ENCODE measurements at regions of chr12 and their contacts with region 1.

Region 1: DNA sequence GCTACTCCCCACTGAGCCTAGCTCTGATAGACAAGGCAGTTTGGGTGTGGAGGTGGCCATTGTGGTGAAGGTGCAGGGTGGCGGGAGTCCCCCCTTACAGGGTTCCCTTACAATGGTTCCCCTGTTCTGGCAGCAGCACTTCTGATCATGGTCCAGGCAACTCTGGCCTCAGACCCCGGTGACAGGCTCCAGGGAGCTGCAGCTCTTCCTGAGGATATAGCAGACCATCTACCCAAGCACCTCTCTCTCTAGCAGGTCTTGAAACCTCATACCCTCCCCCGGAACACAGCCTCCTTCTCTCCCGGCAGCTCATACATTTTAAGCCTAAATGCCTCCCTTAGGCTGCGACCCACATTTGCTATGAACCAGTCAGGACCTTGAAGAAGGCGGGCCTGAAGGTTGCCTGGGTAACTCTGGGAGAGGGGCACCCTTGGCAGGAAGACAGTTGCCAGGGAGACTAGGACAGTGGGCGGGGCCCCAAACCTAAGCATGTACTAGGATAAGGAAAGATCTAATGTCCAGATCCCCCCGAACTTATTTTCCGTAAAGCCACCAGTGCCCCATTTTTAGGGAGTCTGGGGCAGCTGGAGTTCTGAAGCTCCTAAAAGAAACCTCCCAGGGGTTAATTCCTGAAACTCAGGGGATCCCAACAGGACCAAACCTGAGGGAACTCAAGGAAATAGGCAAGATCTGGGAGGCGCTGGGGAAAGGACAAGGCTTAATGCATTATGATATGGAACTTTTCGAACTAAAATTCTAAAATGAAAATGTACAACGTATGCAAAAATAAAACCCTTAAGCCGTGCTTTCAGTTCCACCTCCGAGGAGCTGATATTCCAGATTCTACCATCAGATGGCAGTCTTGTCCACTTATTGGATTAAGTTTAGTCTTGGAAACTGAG is 4.5 kb upstream of the GDF11 start:
- H3K4me3 Mint-ChIP-seq: peak overlapping the region; percentile 73
- H3K27ac Mint-ChIP-seq: peak overlapping the region; percentile 90
- H3K4me1 Mint-ChIP-seq: peaks cover 35% of the 10 kb centered on the region
- H3K27me3 Mint-ChIP-seq: peaks cover 20% of the 10 kb centered on the region

Region 2: DNA sequence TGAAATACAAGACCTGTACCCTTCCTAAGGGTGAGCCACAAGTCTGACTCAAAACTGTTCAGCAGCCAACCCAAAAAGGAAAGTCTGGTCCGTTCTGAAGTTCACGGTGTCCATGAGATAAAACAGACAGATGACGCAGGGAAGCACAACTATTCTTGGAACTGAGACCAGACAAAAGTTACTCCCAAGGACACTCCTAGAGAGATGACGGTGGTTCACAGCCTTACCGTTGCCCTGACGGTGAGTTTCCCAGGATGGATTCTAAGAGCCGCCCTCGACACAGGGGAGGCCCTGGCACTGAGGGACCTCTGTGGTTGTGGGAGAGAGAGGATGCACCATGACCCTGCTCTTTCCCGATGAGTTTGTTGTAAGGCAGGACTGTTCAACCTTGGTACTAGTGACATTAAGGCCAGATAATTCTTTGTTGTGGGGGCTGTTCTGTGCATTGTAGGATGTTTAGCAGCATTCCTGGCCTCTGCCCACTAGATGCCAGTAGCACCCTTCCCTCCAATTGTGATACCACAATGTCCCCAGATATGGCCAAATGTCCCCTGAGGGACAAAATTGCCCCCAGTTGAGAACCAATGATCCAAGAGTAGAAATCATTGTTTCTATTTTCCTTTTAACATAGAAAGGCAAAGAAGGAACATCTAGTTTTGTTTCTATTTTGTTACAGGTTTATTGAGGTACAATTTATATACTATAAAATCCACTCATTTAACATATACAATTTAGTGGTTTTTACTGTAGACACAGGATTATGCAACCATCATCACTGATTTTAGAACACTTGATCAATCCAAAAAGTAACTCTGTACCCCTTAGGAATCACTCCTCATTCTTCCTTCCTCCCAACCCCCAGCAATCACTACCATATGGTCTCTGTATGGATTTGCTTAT is 78.6 kb before region 1 on chr12:
- intact Hi-C with region 1: loop called (anchors 1 kb)
- H3K4me3 Mint-ChIP-seq: no peak overlapping the region
- H3K27ac Mint-ChIP-seq: no peak overlapping the region
- H3K4me1 Mint-ChIP-seq: peaks cover 16% of the 10 kb centered on the region
- H3K27me3 Mint-ChIP-seq: peaks cover 6% of the 10 kb centered on the region

Region 3: DNA sequence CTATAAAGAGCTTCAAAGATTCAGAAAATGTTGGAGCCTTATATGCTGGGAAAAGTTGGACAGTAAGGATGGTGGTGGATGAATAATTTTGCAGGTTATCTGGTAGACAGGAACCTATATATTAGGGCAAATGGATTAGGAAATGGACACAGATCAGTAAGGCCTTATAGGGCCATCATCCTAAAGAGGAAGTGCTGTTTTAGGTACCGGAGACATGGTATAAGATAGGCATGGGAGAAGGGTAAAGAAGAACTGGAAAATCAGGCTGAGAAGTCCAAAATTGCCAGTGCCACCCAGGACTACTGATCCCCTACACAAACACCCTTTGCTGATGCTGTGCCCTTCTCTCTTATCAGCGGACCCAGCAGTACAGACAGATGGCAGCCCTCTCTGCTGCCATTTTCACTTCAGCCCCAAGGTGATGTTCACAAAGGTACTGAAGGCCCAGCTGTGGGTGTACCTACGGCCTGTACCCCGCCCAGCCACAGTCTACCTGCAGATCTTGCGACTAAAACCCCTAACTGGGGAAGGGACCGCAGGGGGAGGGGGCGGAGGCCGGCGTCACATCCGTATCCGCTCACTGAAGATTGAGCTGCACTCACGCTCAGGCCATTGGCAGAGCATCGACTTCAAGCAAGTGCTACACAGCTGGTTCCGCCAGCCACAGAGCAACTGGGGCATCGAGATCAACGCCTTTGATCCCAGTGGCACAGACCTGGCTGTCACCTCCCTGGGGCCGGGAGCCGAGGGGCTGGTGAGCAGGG is 10.0 kb after region 1 on chr12:
- intact Hi-C with region 1: no loop called
- H3K4me3 Mint-ChIP-seq: no peak overlapping the region
- H3K27ac Mint-ChIP-seq: no peak overlapping the region
- H3K4me1 Mint-ChIP-seq: peaks cover 21% of the 10 kb centered on the region
- H3K27me3 Mint-ChIP-seq: peaks cover 26% of the 10 kb centered on the region

Region 4: GRCh38 chr12:55797068-55797467 is 58.7 kb after region 1 on chr12:
- intact Hi-C with region 1: loop called (anchors 10 kb)
- H3K4me3 Mint-ChIP-seq: no peak overlapping the region
- H3K27ac Mint-ChIP-seq: no peak overlapping the region
- H3K4me1 Mint-ChIP-seq: peaks cover 6% of the 10 kb centered on the region
- H3K27me3 Mint-ChIP-seq: no peaks in the 10 kb centered on the region

Region 5: DNA sequence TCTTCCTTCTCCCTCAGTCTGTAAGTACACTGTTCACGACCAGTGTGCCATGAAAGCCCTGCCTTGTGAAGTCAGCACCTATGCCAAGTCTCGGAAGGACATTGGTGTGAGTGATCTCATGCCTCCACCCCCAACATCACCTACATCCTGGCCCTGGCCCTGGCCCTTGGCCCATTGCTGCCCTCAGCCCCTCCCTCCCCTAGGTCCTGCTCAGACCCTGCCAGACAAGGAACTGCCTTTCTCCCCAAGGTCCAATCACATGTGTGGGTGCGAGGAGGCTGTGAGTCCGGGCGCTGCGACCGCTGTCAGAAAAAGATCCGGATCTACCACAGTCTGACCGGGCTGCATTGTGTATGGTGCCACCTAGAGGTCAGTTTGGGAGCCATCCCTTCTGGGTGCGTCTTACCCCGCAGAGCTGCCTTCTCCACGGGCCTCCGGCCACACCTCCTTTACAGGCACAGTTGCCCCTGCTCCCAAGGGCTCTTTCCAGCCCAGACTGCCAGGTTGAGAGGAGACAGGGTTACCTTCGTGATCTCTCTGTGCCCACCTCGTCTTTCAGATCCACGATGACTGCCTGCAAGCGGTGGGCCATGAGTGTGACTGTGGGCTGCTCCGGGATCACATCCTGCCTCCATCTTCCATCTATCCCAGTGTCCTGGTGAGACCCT is 201.8 kb after region 1 on chr12:
- intact Hi-C with region 1: loop called (anchors 2 kb)
- H3K4me3 Mint-ChIP-seq: no peak overlapping the region
- H3K27ac Mint-ChIP-seq: no peak overlapping the region
- H3K4me1 Mint-ChIP-seq: peaks cover 19% of the 10 kb centered on the region
- H3K27me3 Mint-ChIP-seq: no peaks in the 10 kb centered on the region

Region 6: GRCh38 chr12:56029666-56030293 is 291.4 kb after region 1 on chr12:
- intact Hi-C with region 1: loop called (anchors 5 kb)
- H3K4me3 Mint-ChIP-seq: no peak overlapping the region
- H3K27ac Mint-ChIP-seq: no peak overlapping the region
- H3K4me1 Mint-ChIP-seq: peaks cover 6% of the 10 kb centered on the region
- H3K27me3 Mint-ChIP-seq: no peaks in the 10 kb centered on the region

Region 7: GRCh38 chr12:56041552-56042429 is 303.4 kb after region 1 on chr12 and contains the start of gene RPS26:
- intact Hi-C with region 1: loop called (anchors 5 kb)
- H3K4me3 Mint-ChIP-seq: peak within 1 kb of the TSS; percentile 95
- H3K27ac Mint-ChIP-seq: peak within 1 kb of the TSS; percentile 97
- H3K4me1 Mint-ChIP-seq: peaks cover 10% of the 10 kb centered on the region
- H3K27me3 Mint-ChIP-seq: no peaks in the 10 kb centered on the region